ENCODE measurements at regions of chr12 and their contacts with region 1.

Region 1: DNA sequence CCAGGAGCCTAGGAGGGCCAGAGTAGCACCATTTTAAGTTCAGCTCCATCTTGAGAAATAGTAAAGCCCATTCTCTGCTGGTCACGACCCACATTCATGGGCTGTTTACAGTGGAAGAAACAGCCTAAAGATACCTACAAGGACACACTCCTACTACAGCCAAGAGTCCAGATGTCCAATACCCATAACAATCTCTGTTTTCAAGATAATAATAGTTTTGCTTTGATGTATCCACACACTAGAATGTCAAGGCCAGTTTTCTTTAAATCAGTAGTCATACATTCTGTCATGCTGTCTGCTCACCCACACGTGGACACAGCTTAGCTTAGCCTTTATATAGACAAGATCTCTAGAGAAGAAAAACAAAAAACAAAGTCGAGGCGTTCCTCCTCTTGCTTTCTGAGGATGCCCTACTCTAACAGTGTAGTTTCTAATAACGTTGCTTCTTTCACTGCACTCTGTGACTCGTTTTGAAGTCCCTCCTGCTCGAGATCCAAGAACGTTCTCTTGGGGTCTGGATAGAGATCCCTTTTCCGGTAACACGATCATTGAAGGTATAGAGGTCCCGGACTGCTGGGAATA is 17.9 kb upstream of the ETFBKMT start:
- DNase-seq: no peak
- ATAC-seq: no peak

Region 2: GRCh38 chr12:31406345-31406744 is 235.3 kb before region 1 on chr12:
- intact Hi-C with region 1: loop called (anchors 1 kb)
- DNase-seq: no peak
- ATAC-seq: no peak

Region 3: GRCh38 chr12:31466768-31467167 is 174.8 kb before region 1 on chr12:
- intact Hi-C with region 1: no loop called
- DNase-seq: no peak
- ATAC-seq: no peak

Region 4: DNA sequence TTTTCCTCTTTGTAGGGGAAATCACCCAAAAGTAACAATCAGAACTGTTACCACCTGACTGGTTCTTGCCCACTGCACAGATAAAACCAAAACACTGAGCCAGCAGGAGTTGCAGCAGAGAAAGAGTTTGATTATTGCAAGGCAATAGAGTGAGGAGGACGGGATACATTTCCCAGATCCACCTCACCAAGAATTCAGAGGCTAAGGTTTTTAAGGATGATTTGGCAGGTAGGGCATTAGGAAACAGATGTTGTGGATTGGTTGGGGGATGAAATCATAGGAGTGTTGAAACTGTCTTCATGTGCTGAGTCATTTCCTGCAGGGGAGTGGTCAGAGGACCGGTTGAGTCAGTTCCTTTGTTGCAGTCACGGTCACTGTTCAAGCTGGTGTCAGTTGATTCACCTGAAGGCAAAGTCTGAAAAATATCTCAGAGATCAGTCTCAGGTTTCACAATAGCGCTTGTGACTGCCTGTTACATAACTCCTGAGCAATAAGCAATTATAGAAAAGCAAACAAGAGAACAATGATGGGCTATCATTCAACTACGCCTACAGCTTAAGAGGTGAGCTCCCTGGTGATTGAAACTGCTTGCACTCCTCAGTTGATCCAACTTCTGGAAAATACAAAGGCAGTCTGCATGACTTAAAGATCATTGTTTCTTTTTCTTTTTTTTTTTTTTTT is 107.6 kb after region 1 on chr12:
- intact Hi-C with region 1: no loop called
- DNase-seq: no peak
- ATAC-seq: peak; percentile 44

Region 5: DNA sequence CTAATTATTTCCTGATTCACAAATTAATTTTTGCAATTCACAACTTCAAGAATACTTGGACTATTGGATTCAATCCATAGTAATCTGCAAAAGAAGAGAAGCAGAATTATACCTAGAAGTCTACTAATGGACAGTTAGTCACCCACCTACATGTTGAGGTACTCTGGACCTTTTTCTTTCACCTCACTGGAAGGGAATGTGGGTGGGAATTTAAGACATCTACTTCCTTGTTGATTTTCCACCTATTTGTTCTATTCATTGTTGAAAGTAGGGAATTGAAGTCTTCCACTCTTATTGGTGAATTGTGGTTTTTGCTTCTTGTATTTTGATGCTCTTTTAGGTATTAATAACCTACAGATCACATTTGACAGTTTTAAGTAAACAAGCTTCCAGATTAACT is 328.6 kb after region 1 on chr12:
- intact Hi-C with region 1: no loop called
- DNase-seq: no peak
- ATAC-seq: no peak

Region 6: GRCh38 chr12:32083489-32083888 is 441.9 kb after region 1 on chr12:
- intact Hi-C with region 1: no loop called
- DNase-seq: no peak
- ATAC-seq: no peak

Measured in Right ventricle myocardium inferior (tissue), 1 donor.